Common myeloid progenitor, CD34-positive (primary cell): ENCODE measurements at regions of chr12 and their contacts with region 1.

Region 1: DNA sequence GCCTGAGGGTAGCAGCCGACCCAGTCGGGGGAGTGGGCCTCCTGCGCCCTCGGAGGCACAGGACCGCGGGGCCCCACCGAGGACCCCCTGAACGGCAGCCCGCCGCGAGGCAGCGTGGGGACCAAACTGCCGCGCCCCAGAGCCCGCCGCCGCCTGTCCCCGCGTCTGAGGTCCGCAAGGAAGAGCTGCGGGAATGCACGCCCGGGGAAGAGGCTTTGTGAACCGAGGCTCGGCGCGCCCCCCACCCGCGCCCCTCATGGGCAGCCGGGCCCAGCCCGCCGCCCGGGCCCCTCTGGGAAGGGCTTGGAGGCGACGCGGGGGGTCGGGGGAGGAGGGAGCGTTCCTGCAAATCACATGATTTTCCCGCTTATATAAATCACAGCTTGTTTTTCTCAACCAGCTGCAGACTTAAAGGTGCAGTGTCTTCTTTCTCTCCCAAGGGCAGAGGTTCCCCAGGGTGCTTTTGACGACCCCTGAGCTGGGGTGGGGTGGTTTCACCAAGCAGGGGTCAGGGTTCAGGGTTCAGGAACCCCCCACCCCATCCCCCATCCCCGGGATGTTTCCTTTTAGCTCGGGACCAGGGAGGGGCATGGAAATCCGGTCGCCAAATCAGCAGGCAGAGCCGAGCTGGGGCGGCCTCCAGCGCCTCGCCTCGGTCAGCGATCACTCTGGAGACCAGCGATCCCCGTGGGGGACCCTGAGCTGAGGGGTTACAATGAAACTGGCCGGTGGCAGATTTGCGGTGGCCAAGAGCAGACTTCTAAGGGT is 44.7 kb upstream of the ATP23 start:
- DNase-seq: peak in 1 of 3 donors; percentile 30
- H3K4me3 ChIP-seq: peak overlapping the region; percentile 40 to 75 (median 50)
- H3K27ac ChIP-seq: no peak overlapping the region
- H3K4me1 ChIP-seq: peaks cover 23 to 68% (median 61%) of the 10 kb centered on the region in 4 experiments
- H3K27me3 ChIP-seq: no peaks in the 10 kb centered on the region

Region 2: GRCh38 chr12:57754411-57755193 is 142.0 kb before region 1 on chr12 and contains the start of gene MARCHF9:
- CTCF ChIA-PET with region 1: interaction called, 11 read pairs
- POLR2A ChIA-PET with region 1: no interaction called
- DNase-seq: peak; percentile 61 to 77 (median 70)
- H3K4me3 ChIP-seq: peak within 1 kb of the TSS; percentile 59 to 84 (median 74)
- H3K27ac ChIP-seq: peak within 1 kb of the TSS in 1 of 2 experiments; percentile 49
- H3K4me1 ChIP-seq: peaks cover 18 to 53% (median 48%) of the 10 kb centered on the region in 4 experiments
- H3K27me3 ChIP-seq: peaks cover 0 to 4% (median 0%) of the 10 kb centered on the region in 5 experiments

Region 3: DNA sequence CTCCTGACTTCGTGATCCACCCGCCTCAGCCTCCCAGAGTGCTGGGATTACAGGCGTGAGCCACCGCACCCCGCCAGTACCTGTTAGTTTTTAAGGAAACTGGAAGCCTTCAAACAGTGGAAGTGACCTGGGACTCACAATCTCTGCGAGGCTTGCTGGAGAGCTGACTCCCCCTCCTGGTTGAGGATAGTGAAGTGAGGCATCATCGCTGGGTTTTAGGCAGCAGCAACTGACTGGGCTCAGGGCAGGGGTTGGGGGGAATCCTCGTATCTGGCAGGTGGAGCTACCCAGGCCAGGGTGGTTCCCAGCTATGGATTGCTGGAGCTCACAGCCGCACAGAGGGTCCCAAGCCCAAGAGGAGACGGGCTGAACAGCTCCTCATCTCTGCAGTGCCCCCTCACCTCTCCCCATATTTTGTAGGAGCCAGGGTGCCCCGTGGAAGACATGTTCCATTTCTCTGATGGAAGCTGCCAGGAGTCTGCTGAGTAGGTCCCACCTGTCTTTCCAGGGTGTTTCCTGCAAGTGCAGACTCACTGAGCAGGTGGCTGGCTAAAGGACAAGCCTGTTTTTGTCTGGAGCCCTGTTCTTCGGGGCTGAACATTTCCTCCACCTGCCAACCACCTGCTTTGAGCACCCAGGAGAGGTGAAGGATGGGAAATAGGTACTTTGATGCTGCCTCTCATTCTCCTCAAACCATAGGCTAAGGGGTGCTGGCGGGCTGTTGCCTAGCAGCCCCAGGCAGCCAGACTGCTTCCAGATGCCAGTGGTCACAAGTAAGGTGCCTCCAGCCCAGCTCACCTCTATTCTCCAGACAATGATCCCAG is 81.2 kb before region 1 on chr12:
- CTCF ChIA-PET with region 1: interaction called, 13 read pairs
- POLR2A ChIA-PET with region 1: no interaction called
- DNase-seq: no peak
- H3K4me3 ChIP-seq: no peak overlapping the region
- H3K27ac ChIP-seq: no peak overlapping the region
- H3K4me1 ChIP-seq: peaks cover 0 to 10% (median 3%) of the 10 kb centered on the region in 4 experiments
- H3K27me3 ChIP-seq: no peaks in the 10 kb centered on the region

Region 4: DNA sequence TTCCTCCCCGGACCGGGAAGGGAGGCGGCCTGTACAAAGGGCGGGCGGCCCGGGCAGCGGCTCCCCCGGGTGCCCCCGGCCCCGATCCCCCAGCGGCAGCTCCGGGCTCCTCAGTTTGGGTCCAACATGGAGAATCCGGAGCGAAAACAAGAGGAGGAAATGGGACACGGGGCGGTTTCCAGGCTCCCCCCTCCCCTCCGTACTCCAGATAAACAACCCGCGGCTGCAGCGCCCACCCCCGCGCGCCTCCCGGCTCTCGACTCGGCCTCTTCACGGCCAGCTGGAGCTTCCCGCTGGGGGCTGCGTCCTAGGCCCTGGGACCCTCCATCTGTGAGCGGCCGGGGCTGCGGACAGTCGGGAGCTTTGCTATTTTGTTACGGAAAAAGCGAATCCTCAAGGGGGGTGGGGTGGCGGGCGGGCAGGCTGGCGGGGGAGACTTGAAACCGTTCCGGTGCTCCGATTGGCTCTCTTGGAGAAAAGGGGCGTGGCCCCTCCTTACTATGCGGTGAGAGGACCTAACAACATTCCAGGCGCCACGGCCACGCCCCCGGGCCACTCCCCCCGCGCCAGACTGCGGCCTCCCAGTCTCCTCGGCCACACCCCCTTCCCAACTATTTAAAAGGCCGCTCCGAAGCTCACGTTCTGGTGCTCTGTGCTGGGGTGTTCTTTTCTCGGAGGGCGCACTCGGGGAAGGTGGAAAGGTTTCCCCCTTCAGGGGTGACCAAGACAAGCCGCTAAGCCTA is 49.9 kb before region 1 on chr12 and contains the start of gene CTDSP2:
- CTCF ChIA-PET with region 1: interaction called, 29 read pairs
- POLR2A ChIA-PET with region 1: interaction called, 3 read pairs
- DNase-seq: peak; percentile 92 to 96 (median 92)
- H3K4me3 ChIP-seq: peak within 1 kb of the TSS; percentile 89 to 99 (median 93)
- H3K27ac ChIP-seq: peak within 1 kb of the TSS; percentile 74 to 92
- H3K4me1 ChIP-seq: peaks cover 27 to 54% (median 45%) of the 10 kb centered on the region in 4 experiments
- H3K27me3 ChIP-seq: no peaks in the 10 kb centered on the region

Region 5: GRCh38 chr12:57865090-57865751 is 31.4 kb before region 1 on chr12:
- CTCF ChIA-PET with region 1: interaction called, 24 read pairs
- POLR2A ChIA-PET with region 1: interaction called, 3 read pairs
- DNase-seq: peak in 2 of 3 donors; percentile 50 to 63
- H3K4me3 ChIP-seq: peak overlapping the region; percentile 23 to 76 (median 57)
- H3K27ac ChIP-seq: peak overlapping the region in 1 of 2 experiments; percentile 46
- H3K4me1 ChIP-seq: peaks cover 0 to 10% (median 6%) of the 10 kb centered on the region in 4 experiments
- H3K27me3 ChIP-seq: peaks cover 0 to 3% (median 0%) of the 10 kb centered on the region in 5 experiments

Region 6: GRCh38 chr12:57952766-57953165 is 56.1 kb after region 1 on chr12:
- CTCF ChIA-PET with region 1: no interaction called
- POLR2A ChIA-PET with region 1: no interaction called
- DNase-seq: no peak
- H3K4me3 ChIP-seq: no peak overlapping the region
- H3K27ac ChIP-seq: no peak overlapping the region
- H3K4me1 ChIP-seq: no peaks in the 10 kb centered on the region
- H3K27me3 ChIP-seq: no peaks in the 10 kb centered on the region